Activated CD4-positive, alpha-beta memory T cell treated with anti-CD3 and anti-CD28 coated beads, Interleukin-2, amount 10 ng/mL, durations not matched to agents 7 days and 5 days (primary cell): ENCODE measurements at regions of chr6 and their contacts with region 1.

Region 1: GRCh38 chr6:2781685-2782355 is 16.6 kb downstream of the WRNIP1 start:
- DNase-seq: no peak
- H3K4me3 Mint-ChIP-seq: no peak overlapping the region
- H3K27ac Mint-ChIP-seq: no peak overlapping the region
- H3K4me1 Mint-ChIP-seq: peaks cover 6% of the 10 kb centered on the region
- H3K27me3 Mint-ChIP-seq: no peaks in the 10 kb centered on the region

Region 2: GRCh38 chr6:1242446-1242845 is 1539.4 kb before region 1 on chr6:
- CTCF ChIA-PET with region 1: no interaction called
- POLR2A ChIA-PET with region 1: no interaction called
- DNase-seq: no peak
- H3K4me3 Mint-ChIP-seq: no peak overlapping the region
- H3K27ac Mint-ChIP-seq: no peak overlapping the region
- H3K4me1 Mint-ChIP-seq: no peaks in the 10 kb centered on the region
- H3K27me3 Mint-ChIP-seq: no peaks in the 10 kb centered on the region

Region 3: GRCh38 chr6:2765166-2765895 is 16.5 kb before region 1 on chr6 and contains the start of gene WRNIP1:
- CTCF ChIA-PET with region 1: interaction called, 11 read pairs
- POLR2A ChIA-PET with region 1: interaction called, 13 read pairs
- DNase-seq: peak; percentile 98
- H3K4me3 Mint-ChIP-seq: peak within 1 kb of the TSS; percentile 90
- H3K27ac Mint-ChIP-seq: peak within 1 kb of the TSS; percentile 96
- H3K4me1 Mint-ChIP-seq: peaks cover 50% of the 10 kb centered on the region
- H3K27me3 Mint-ChIP-seq: no peaks in the 10 kb centered on the region
- total RNA-seq, gene WRNIP1: 39.6 to 42.1 TPM